K562 (cell line): ENCODE measurements at regions of chr16 and their contacts with region 1.

Region 1: GRCh38 chr16:53435066-53435688 is 906 bp downstream of the RBL2 start:
- DNase-seq: peak; percentile 73 to 89 (median 80)
- ATAC-seq: peak; percentile 92
- H3K4me3 ChIP-seq: peak overlapping the region; percentile 64
- H3K27ac ChIP-seq: peak overlapping the region; percentile 96
- H3K4me1 ChIP-seq: peaks cover 7 to 9% of the 10 kb centered on the region in 2 experiments
- H3K27me3 ChIP-seq: no peaks in the 10 kb centered on the region
- CTCF ChIP-seq: no peak
- EP300 ChIP-seq: no peak
- POLR2A ChIP-seq: peak; percentile 42; the same call in 1 of the 2 replicates
- RAD21 ChIP-seq: no peak

Region 2: GRCh38 chr16:52872731-52873130 is 562.4 kb before region 1 on chr16:
- CTCF ChIA-PET with region 1: no interaction called
- POLR2A ChIA-PET with region 1: no interaction called
- in situ Hi-C with region 1: no loop called
- intact Hi-C with region 1: no loop called
- DNase-seq: no peak
- ATAC-seq: no peak
- H3K4me3 ChIP-seq: no peak overlapping the region
- H3K27ac ChIP-seq: no peak overlapping the region
- H3K4me1 ChIP-seq: no peaks in the 10 kb centered on the region
- H3K27me3 ChIP-seq: no peaks in the 10 kb centered on the region
- CTCF ChIP-seq: no peak
- EP300 ChIP-seq: no peak
- POLR2A ChIP-seq: no peak
- RAD21 ChIP-seq: no peak

Region 3: GRCh38 chr16:53220585-53220984 is 214.6 kb before region 1 on chr16:
- CTCF ChIA-PET with region 1: no interaction called
- POLR2A ChIA-PET with region 1: no interaction called
- in situ Hi-C with region 1: no loop called
- intact Hi-C with region 1: loop called (anchors 10 kb)
- DNase-seq: peak in 3 of 4 experiments; percentile 20 to 57 (median 33)
- ATAC-seq: peak; percentile 81
- H3K4me3 ChIP-seq: no peak overlapping the region
- H3K27ac ChIP-seq: no peak overlapping the region; the same call in 2 of the 3 replicates
- H3K4me1 ChIP-seq: peaks cover 7 to 38% of the 10 kb centered on the region in 2 experiments
- H3K27me3 ChIP-seq: no peaks in the 10 kb centered on the region
- CTCF ChIP-seq: peak; percentile 42 to 56 (median 51); a peak in 3 of 6 replicates
- EP300 ChIP-seq: no peak
- POLR2A ChIP-seq: no peak
- RAD21 ChIP-seq: peak; percentile 40 to 73